ENCODE measurements at regions of chr10 and their contacts with region 1.

Region 1: DNA sequence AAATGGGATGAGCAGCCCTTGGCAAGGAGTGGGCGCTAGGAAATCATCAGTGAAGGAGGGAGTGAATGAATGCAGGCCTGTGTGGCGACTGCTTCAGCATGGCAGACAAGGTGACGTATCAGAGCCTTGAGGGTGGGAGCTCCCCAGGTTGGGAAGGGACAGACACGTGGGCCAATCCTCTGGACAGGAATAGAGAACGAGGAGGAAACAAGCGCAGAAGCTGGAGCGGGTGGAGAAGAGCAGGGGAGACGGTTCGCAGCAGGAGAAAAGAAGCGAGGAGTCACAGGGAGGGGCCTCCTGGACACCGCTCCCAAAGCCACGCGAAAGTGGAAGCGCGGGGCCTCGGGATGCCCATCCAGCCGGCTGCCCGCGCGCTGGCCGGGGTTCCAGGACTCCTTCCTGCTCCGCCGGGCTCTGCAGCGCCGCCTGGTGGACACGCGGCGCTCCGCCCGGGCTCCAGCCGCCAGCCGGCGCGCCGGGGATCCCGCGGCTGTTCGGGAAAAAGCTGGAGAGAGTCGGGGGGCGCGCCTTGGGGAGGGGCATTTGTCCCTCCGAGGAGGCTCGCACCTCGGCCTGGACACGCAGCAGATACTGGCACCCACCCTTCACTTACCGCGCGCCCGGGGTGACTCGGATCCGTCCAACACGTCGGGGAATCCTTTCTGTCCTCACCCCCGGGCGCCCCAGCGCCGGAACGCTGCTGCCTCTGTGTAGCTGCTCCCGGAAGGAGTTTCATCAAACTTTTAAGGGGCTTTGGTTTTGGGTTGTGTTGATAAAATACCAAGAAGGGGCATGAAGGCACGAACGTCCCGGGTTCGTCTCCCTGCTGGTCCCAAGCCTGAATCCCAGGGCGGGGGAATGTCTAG is 6.3 kb downstream of the ZNF503 start:
- DNase-seq: peak; percentile 29 to 65
- ATAC-seq: peak; percentile 53 to 79; a peak in 4 of 6 replicates
- H3K4me3 ChIP-seq: peak overlapping the region; percentile 18; the same call in 2 of the 3 replicates
- H3K27ac ChIP-seq: peak overlapping the region; percentile 41 to 80; a peak in 4 of 6 replicates
- H3K4me1 ChIP-seq: peaks cover 8% of the 10 kb centered on the region; the same call in 2 of the 3 replicates
- CTCF ChIP-seq: peak; percentile 93
- EP300 ChIP-seq: no peak
- POLR2A ChIP-seq: no peak
- RAD21 ChIP-seq: peak; percentile 57 to 77

Region 2: DNA sequence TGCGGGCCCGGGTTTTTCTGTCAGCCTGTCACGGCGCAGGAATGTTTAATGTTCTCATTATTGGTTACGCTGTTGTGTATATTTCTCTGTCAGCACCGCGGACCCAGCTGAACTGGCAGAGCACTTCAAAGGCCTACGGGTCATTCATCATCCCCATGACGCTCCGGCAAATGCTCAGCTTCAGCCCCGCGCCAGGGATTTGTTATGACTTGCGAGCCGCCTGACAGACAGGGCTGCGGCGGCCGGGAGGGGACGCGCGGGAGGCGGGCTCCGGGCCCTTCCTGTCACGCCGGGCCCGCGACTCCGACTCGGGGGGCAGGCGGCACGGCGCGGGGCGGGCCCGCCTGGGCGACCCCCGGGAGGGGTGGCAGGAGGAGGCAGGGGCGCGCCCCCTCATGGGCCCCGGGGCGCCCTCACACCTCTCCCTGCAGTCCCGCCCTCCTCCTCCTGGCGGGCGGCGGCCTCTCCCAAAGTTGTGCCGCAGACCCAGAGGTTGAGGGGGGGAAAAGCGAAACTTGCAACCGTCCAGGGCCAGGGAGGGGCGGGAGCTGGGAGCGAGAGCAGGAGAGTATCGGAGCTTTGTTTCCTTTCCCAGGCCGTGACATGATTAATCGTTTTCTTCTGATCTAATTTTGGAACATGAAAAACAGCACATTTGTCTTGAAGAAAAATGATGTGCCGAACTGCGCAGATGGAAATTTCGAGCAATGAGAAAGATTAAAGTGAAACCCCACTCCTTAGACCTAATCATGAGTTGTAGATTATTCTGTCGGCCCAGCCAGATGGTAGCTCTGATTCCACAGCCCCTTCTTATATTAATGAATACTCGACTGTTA is 100.2 kb before region 1 on chr10:
- CTCF ChIA-PET with region 1: interaction called, 38 read pairs
- POLR2A ChIA-PET with region 1: no interaction called
- DNase-seq: peak; percentile 58 to 84
- ATAC-seq: peak; percentile 90 to 94
- H3K4me3 ChIP-seq: peak overlapping the region; percentile 86
- H3K27ac ChIP-seq: peak overlapping the region; percentile 84 to 93
- H3K4me1 ChIP-seq: peaks cover 22% of the 10 kb centered on the region
- CTCF ChIP-seq: peak; percentile 23; the same call in 2 of the 3 replicates
- EP300 ChIP-seq: peak; percentile 23 to 78; a peak in 1 of 5 replicates
- POLR2A ChIP-seq: no peak
- RAD21 ChIP-seq: peak in 1 of 2 experiments; percentile 37; a peak in 2 of 5 replicates

Region 3: GRCh38 chr10:75358835-75359431 is 36.4 kb before region 1 on chr10:
- CTCF ChIA-PET with region 1: interaction called, 17 read pairs
- POLR2A ChIA-PET with region 1: no interaction called
- DNase-seq: peak; percentile 53 to 55
- ATAC-seq: peak; percentile 84 to 91
- H3K4me3 ChIP-seq: no peak overlapping the region
- H3K27ac ChIP-seq: peak overlapping the region; percentile 75 to 91
- H3K4me1 ChIP-seq: peaks cover 20% of the 10 kb centered on the region
- CTCF ChIP-seq: no peak
- EP300 ChIP-seq: peak in 1 of 2 experiments; percentile 58; a peak in 1 of 5 replicates
- POLR2A ChIP-seq: no peak
- RAD21 ChIP-seq: no peak

Region 4: GRCh38 chr10:75444781-75445386 is 49.6 kb after region 1 on chr10:
- CTCF ChIA-PET with region 1: no interaction called
- POLR2A ChIA-PET with region 1: no interaction called
- DNase-seq: no peak
- ATAC-seq: no peak
- H3K4me3 ChIP-seq: no peak overlapping the region
- H3K27ac ChIP-seq: no peak overlapping the region
- H3K4me1 ChIP-seq: peaks cover 7% of the 10 kb centered on the region; the same call in 1 of the 3 replicates
- CTCF ChIP-seq: no peak
- EP300 ChIP-seq: no peak
- POLR2A ChIP-seq: no peak
- RAD21 ChIP-seq: no peak

Region 5: GRCh38 chr10:75464478-75465449 is 69.5 kb after region 1 on chr10:
- CTCF ChIA-PET with region 1: no interaction called
- POLR2A ChIA-PET with region 1: no interaction called
- DNase-seq: no peak
- ATAC-seq: no peak
- H3K4me3 ChIP-seq: no peak overlapping the region
- H3K27ac ChIP-seq: peak overlapping the region in 1 of 2 experiments; percentile 29; a peak in 2 of 6 replicates
- H3K4me1 ChIP-seq: peaks cover 43% of the 10 kb centered on the region
- CTCF ChIP-seq: no peak
- EP300 ChIP-seq: no peak
- POLR2A ChIP-seq: no peak
- RAD21 ChIP-seq: no peak

Region 6: GRCh38 chr10:75910032-75910431 is 514.7 kb after region 1 on chr10:
- CTCF ChIA-PET with region 1: interaction called, 38 read pairs
- POLR2A ChIA-PET with region 1: no interaction called
- DNase-seq: peak in 1 of 2 experiments; percentile 19
- ATAC-seq: no peak
- H3K4me3 ChIP-seq: no peak overlapping the region
- H3K27ac ChIP-seq: no peak overlapping the region
- H3K4me1 ChIP-seq: no peaks in the 10 kb centered on the region
- CTCF ChIP-seq: peak; percentile 60
- EP300 ChIP-seq: no peak
- POLR2A ChIP-seq: no peak
- RAD21 ChIP-seq: peak; percentile 46 to 60

Region 7: DNA sequence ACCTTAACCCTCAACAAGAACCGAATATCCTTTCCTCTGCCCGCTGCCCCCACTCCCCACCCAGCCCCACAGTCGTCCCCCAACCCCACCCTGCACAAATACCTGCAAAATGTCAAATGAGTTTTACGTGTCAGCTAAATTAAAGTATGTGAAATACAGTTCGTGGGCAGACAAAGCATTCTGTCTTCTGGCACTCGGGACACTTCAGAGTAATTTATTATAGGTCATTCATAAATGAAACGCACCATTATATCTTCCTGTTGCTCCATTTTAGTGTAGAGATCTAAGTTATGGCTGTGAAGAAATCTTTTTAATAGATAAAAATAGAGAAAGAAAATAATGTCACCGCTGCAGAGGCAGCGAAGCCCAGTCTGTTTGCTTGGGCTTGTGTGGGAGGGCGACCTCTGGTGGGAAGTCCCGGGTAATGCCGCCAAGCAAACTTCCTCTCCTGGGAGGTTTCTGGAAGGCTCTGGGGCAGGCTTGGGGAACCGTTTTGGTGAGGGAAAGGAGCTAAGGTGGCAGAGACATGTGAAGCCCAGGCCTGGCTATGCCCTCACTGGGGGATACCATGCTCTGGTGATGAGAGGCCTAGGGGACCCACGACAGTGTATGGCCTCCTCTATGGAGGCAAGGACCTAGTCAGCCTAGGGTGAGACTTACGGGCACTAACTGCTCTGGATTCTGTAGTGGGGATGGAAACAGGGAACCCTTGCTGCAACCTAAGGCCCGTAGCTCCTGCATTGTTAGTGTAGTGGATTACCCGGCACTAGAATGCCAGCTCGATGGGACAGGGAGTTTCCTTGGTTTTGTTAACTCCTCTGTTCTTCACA is 641.0 kb after region 1 on chr10:
- CTCF ChIA-PET with region 1: interaction called, 83 read pairs
- POLR2A ChIA-PET with region 1: no interaction called
- DNase-seq: peak; percentile 64 to 65
- ATAC-seq: peak; percentile 64 to 82
- H3K4me3 ChIP-seq: peak overlapping the region; percentile 9; the same call in 1 of the 3 replicates
- H3K27ac ChIP-seq: peak overlapping the region; percentile 47 to 75
- H3K4me1 ChIP-seq: peaks cover 48% of the 10 kb centered on the region
- CTCF ChIP-seq: peak; percentile 86
- EP300 ChIP-seq: no peak
- POLR2A ChIP-seq: no peak
- RAD21 ChIP-seq: peak; percentile 81 to 88